ENCODE measurements at regions of chr2 and their contacts with region 1.

Region 1: GRCh38 chr2:191811807-191812602 is 34.9 kb downstream of the CAVIN2 start:
- H3K4me3 ChIP-seq: no peak overlapping the region
- H3K27ac ChIP-seq: no peak overlapping the region
- H3K4me1 ChIP-seq: no peaks in the 10 kb centered on the region
- CTCF ChIP-seq: peak; percentile 57; the same call in 1 of the 2 replicates

Region 2: GRCh38 chr2:191748059-191748461 is 63.9 kb before region 1 on chr2:
- CTCF ChIA-PET with region 1: no interaction called
- POLR2A ChIA-PET with region 1: no interaction called
- H3K4me3 ChIP-seq: no peak overlapping the region
- H3K27ac ChIP-seq: no peak overlapping the region
- H3K4me1 ChIP-seq: no peaks in the 10 kb centered on the region
- CTCF ChIP-seq: no peak

Region 3: GRCh38 chr2:191797960-191798876 is 13.8 kb before region 1 on chr2:
- CTCF ChIA-PET with region 1: interaction called, 17 read pairs
- POLR2A ChIA-PET with region 1: no interaction called
- H3K4me3 ChIP-seq: no peak overlapping the region
- H3K27ac ChIP-seq: no peak overlapping the region
- H3K4me1 ChIP-seq: no peaks in the 10 kb centered on the region
- CTCF ChIP-seq: no peak

Region 4: DNA sequence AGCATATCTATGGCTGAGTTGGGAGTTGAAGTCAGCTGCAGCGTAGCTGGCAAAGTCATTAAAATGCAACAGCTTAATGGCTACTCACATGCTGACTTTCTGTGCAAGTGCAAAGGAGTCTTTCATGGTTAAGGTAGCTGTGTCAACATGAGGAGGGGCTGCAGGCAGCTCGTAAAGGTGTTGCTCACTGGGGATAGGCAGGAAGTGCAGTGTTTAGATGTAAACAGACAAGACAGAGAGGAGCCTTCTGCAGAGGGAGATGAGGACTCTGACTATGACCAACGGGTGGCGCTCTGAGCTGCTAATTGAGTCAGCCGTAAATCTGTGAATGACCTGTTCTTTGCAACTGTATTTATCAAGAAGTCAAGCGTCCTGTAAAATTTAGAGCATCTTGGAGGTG is 57.2 kb after region 1 on chr2:
- CTCF ChIA-PET with region 1: interaction called, 18 read pairs
- POLR2A ChIA-PET with region 1: no interaction called
- H3K4me3 ChIP-seq: no peak overlapping the region
- H3K27ac ChIP-seq: no peak overlapping the region
- H3K4me1 ChIP-seq: no peaks in the 10 kb centered on the region
- CTCF ChIP-seq: no peak; the same call in 1 of the 2 replicates

Region 5: DNA sequence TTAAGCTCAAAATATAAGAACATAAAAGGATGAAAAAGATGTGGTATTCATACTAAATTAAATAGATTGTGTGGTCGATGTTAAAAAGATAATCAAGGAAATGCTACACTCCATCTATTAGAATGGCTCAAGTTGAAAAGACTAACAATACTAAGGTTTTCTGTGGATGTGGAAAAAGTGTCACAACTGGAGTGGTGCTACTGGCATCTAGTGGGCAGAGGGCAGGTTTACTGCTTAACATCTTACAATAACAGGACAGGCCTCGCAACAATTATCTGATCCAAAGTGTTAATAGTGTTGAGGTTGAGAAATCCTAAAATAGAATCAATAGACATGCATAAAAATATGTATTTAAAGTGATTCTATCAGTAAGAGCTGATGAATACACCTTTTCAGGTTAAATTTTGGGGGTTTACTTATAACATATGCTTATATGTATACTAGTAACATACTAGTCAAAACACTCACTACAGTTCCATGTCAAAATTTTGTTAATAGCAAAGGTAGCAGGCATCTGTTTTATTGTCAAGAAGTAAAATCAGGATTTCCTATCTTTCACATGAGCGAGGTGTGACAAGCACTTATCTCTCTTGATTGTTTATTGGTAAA is 474.2 kb after region 1 on chr2:
- CTCF ChIA-PET with region 1: interaction called, 10 read pairs
- POLR2A ChIA-PET with region 1: no interaction called
- H3K4me3 ChIP-seq: no peak overlapping the region
- H3K27ac ChIP-seq: no peak overlapping the region
- H3K4me1 ChIP-seq: no peaks in the 10 kb centered on the region
- CTCF ChIP-seq: 0 out of 2 replicates have a peak, but pooled peaks have one; percentile 18